Activated B cell treated with CpG ODN at 0.5 μM for 24 hours (primary cell): ENCODE measurements at regions of chr9 and their contacts with region 1.

Region 1: DNA sequence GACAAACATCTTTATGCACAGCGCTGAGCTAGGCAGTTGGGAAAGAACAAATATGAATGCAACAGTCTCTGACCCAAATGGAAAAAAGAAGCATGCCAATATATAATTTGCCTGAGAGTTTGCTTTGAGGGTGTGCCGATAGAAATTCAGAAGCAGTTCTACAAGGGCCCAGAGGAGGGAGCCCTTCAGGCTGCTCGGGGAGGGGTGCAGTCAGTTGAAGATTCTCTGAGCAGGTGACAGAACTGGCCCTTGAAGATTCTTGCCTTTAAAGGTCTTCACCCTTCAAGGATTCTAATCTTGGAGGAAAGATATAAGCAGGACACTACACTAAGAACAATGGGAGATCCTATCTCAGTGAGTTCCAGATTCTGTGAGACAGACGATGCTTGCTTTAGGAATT is 3.7 kb upstream of the PAPPA start:
- DNase-seq: no peak
- ATAC-seq: no peak
- H3K4me3 Mint-ChIP-seq: no peak overlapping the region
- H3K27ac Mint-ChIP-seq: no peak overlapping the region
- H3K4me1 Mint-ChIP-seq: peaks cover 5% of the 10 kb centered on the region
- H3K27me3 Mint-ChIP-seq: peaks cover 32% of the 10 kb centered on the region
- CTCF ChIP-seq: no peak

Region 2: GRCh38 chr9:115913696-115914095 is 236.1 kb before region 1 on chr9:
- CTCF ChIA-PET with region 1: no interaction called
- POLR2A ChIA-PET with region 1: no interaction called
- intact Hi-C with region 1: no loop called
- DNase-seq: no peak
- ATAC-seq: no peak
- H3K4me3 Mint-ChIP-seq: no peak overlapping the region
- H3K27ac Mint-ChIP-seq: no peak overlapping the region
- H3K4me1 Mint-ChIP-seq: no peaks in the 10 kb centered on the region
- H3K27me3 Mint-ChIP-seq: no peaks in the 10 kb centered on the region
- CTCF ChIP-seq: no peak

Region 3: DNA sequence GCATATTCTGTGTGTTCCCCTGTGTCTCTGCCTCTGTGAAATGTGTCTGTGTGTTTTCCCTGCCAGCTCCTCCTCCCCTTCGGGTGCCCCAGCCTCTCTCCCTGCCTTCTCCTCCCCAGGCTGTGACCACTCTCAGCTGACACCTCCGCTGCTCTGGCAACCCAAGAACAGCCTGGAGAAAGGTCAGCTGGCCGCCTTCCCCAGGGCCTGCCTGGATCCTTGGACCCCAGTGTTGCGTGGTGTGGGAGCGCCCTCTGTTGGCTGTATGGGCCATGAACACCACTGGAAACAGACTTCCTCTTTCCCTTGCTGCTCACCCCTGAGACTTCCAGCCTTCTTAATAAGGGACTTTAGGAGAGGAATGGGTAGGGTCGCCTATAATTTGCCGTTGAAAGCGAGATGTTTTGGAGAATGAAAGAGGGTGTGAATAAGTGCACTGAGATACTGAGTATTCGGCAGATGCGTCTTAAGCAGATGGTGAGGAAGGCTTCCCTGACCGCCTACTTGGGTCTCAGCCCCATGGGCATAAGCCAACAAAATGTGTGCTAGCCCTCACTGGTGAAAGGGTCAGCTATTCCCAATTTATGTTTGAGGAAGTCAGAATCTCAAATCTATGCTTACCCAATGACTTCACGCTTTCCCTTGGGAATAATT is 422.4 kb after region 1 on chr9:
- CTCF ChIA-PET with region 1: no interaction called
- POLR2A ChIA-PET with region 1: no interaction called
- intact Hi-C with region 1: loop called (anchors 5 kb)
- DNase-seq: no peak
- ATAC-seq: no peak
- H3K4me3 Mint-ChIP-seq: no peak overlapping the region
- H3K27ac Mint-ChIP-seq: no peak overlapping the region
- H3K4me1 Mint-ChIP-seq: no peaks in the 10 kb centered on the region
- H3K27me3 Mint-ChIP-seq: no peaks in the 10 kb centered on the region
- CTCF ChIP-seq: no peak